Motor neuron (in vitro differentiated cells): ENCODE measurements at regions of chr3 and their contacts with region 1.

Region 1: DNA sequence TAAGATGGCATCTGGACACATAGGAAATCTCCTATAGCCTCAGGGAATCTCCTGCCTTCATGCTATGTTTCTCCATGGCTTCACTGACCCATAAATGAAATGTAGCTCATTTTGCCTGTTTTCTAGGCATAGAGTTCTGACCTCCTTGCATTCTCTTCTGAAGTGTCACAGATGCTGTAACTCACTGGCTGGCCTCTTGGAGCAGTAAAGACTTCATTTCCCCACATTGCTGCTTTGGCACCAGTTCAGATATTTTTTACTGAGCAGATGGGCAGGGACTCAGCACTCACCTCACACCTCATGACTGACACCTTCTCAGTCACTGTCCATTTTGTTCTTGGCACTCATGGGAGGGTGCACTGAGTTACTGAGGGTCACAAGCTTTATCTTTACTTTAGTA is 286.7 kb upstream of the TGFBR2 start:
- ATAC-seq: peak in 3 of 8 experiments; percentile 81 to 92 (median 87)
- H3K4me3 ChIP-seq: no peak overlapping the region
- H3K27ac ChIP-seq: no peak overlapping the region
- H3K4me1 ChIP-seq: no peaks in the 10 kb centered on the region

Region 2: DNA sequence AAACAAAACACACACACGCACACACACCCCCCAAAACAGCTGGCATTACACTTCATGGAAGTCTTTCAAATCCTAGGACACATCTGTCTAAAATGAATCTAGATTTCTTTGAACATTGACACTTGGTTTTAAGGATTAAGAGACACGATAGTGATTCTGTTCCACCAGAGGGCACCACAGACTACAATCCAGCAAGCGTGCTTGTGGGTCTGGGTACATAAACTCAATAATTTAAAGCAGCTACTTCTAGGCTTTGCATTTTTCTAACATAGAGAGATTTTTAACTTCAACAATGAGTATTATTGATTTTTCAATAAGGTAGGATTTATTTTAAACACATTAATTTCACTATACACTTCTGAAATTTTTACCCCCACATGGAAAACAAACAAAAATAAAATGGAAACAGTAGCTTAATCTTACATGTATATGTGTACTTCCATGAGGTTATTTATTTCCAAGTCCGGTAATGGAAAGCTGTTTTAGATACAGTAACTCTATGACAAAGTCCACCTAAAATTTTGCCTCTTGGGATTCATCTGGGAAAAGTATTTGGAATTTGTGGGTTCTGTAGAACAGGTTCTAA is 277.3 kb before region 1 on chr3:
- in situ Hi-C with region 1: no loop called
- ATAC-seq: peak; percentile 43 to 77 (median 60)
- H3K4me3 ChIP-seq: no peak overlapping the region
- H3K27ac ChIP-seq: no peak overlapping the region
- H3K4me1 ChIP-seq: peaks cover 4 to 9% of the 10 kb centered on the region in 2 donors

Region 3: GRCh38 chr3:30606301-30607031 is 286.8 kb after region 1 on chr3 and contains the start of gene TGFBR2:
- in situ Hi-C with region 1: loop called in 1 of 9 experiments (anchors 25 kb)
- ATAC-seq: peak; percentile 90 to 94 (median 92)
- H3K4me3 ChIP-seq: peak within 1 kb of the TSS; percentile 39 to 68 (median 53)
- H3K27ac ChIP-seq: no peak within 1 kb of the TSS
- H3K4me1 ChIP-seq: peaks cover 0 to 3% of the 10 kb centered on the region in 2 donors
- total RNA-seq, gene TGFBR2: 0.16 to 27.1 (median 2.2) TPM